Panc1 (cell line): ENCODE measurements at regions of chr9 and their contacts with region 1.

Region 1: DNA sequence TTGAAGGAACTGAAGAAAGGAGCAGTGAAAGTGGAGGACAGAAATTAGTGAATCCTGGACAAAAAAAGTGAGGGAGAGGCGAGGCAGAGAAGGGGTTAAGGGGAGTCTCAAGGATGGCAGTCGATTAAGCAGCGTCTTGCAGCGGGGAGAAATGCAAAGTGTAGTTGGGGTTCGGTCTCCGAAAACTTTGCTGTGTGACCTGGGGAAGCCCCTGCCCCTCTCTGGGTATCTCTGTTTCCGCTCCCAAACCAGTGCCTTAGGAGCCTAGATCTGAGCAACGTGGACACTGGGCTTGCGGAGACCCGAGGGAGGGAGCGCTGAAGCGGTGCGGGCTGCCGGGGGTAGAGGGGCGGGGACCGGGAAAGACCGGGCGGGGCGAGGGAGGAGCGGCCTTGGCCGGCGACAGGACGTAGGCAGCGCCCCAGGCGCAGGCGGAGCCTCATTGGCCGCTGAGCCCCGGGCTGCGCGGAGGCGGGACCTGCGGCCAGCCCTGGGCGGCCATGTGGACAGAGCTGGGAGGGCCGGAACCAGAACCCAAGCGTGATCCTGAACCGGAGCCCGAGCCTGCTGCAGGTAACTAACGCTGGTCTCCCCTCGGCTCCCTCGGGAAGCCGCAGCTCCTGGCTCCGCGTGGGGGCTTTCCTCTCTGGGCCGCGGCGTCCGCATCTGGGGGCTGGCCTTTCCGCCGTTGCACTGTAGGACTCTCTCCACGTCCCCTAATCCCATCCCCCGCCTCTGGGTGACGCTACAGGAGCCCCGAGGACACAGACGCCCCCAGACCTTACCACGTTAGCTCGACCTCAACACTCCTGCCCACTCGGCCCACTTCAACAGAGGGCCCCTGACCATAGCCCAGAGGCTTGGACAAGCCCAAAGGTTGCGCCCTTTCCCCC is at the start of gene ALDH1B1:
- DNase-seq: no peak
- ATAC-seq: peak; percentile 100
- H3K4me3 ChIP-seq: peak within 1 kb of the TSS; percentile 80 to 82
- H3K27ac ChIP-seq: peak within 1 kb of the TSS; percentile 83
- H3K4me1 ChIP-seq: no peaks in the 10 kb centered on the region; the same call in 1 of the 2 replicates
- H3K27me3 ChIP-seq: no peaks in the 10 kb centered on the region
- CTCF ChIP-seq: no peak; the same call in 1 of the 2 replicates
- total RNA-seq, gene ALDH1B1: 34.2 TPM

Region 2: GRCh38 chr9:37899041-37899440 is 493.4 kb before region 1 on chr9:
- CTCF ChIA-PET with region 1: no interaction called
- POLR2A ChIA-PET with region 1: no interaction called
- in situ Hi-C with region 1: no loop called
- intact Hi-C with region 1: loop called (anchors 10 kb)
- DNase-seq: no peak
- ATAC-seq: no peak
- H3K4me3 ChIP-seq: no peak overlapping the region
- H3K27ac ChIP-seq: no peak overlapping the region
- H3K4me1 ChIP-seq: peaks cover 3% of the 10 kb centered on the region; the same call in 1 of the 2 replicates
- H3K27me3 ChIP-seq: no peaks in the 10 kb centered on the region
- CTCF ChIP-seq: no peak